Uterus (tissue), 4 donors: ENCODE measurements at regions of chr7 and their contacts with region 1.

Region 1: DNA sequence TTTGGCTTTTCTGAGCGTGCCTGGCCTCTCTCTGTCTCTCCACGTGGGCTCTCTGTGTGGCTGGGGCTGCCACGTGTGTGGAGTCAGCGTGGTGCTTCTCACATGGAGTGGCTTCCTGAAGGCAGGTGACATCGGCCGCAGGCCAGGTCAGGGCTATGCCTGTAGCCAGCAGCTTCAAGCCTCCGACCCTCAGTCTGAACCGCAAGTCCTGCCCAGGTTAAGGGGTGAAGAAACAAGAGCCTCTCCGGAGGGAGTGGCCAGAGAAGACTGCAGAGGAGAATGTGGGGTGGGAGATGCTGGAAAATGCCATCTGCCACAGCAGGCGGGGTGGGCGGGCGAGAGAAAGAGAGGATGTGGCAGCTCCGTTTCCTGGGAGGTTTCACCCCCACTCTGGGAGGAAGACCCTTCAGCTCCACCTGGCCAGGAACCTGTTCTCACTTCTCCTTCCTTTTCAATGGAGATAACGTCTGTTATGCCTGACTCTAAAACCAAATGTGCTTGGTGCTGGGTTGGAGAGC is 14.3 kb upstream of the VIPR2 start:
- DNase-seq: no peak
- H3K4me3 ChIP-seq: no peak overlapping the region
- H3K27ac ChIP-seq: no peak overlapping the region
- H3K4me1 ChIP-seq: no peaks in the 10 kb centered on the region
- H3K27me3 ChIP-seq: no peaks in the 10 kb centered on the region
- CTCF ChIP-seq: no peak
- POLR2A ChIP-seq: no peak

Region 2: GRCh38 chr7:159127691-159128642 is 31.0 kb before region 1 on chr7:
- intact Hi-C with region 1: loop called (anchors 2 kb)
- DNase-seq: no peak
- H3K4me3 ChIP-seq: no peak overlapping the region
- H3K27ac ChIP-seq: no peak overlapping the region
- H3K4me1 ChIP-seq: no peaks in the 10 kb centered on the region
- H3K27me3 ChIP-seq: no peaks in the 10 kb centered on the region
- CTCF ChIP-seq: no peak
- POLR2A ChIP-seq: no peak

Region 3: GRCh38 chr7:159328096-159328495 is 169.1 kb after region 1 on chr7:
- intact Hi-C with region 1: no loop called
- DNase-seq: no peak
- H3K4me3 ChIP-seq: no peak overlapping the region
- H3K27ac ChIP-seq: no peak overlapping the region
- H3K4me1 ChIP-seq: no peaks in the 10 kb centered on the region
- H3K27me3 ChIP-seq: no peaks in the 10 kb centered on the region
- CTCF ChIP-seq: no peak
- POLR2A ChIP-seq: no peak